Esophagus muscularis mucosa (tissue), 4 donors: ENCODE measurements at regions of chr18 and their contacts with region 1.

Region 1: GRCh38 chr18:64398320-64398719 is 249.4 kb upstream of the LINC00305 start:
- DNase-seq: no peak
- H3K4me3 ChIP-seq: no peak overlapping the region
- H3K27ac ChIP-seq: no peak overlapping the region
- H3K4me1 ChIP-seq: no peaks in the 10 kb centered on the region
- H3K27me3 ChIP-seq: no peaks in the 10 kb centered on the region
- CTCF ChIP-seq: no peak
- EP300 ChIP-seq: no peak
- POLR2A ChIP-seq: no peak

Region 2: DNA sequence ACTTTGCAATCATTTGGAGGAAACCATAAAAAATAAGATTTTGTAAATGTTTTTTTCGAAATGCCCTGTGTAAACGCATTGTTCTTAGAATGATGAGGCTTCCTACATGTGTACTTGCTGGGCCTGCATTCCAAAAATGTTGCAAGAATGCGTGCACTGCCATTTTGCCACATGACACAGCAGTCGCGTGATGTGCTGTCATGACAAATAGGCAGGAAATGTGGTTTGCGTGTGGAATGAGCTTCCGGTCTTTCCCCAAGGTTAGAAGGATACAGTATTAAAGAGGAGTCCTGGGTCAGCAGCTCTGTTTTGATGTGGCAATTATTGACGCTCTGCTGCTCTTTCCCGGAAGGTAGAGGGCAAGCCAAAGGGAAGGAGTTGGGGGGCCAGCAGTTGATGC is 528.9 kb before region 1 on chr18:
- intact Hi-C with region 1: no loop called
- DNase-seq: no peak
- H3K4me3 ChIP-seq: no peak overlapping the region
- H3K27ac ChIP-seq: no peak overlapping the region
- H3K4me1 ChIP-seq: no peaks in the 10 kb centered on the region
- H3K27me3 ChIP-seq: no peaks in the 10 kb centered on the region
- CTCF ChIP-seq: no peak
- EP300 ChIP-seq: no peak
- POLR2A ChIP-seq: no peak

Region 3: GRCh38 chr18:64097497-64097896 is 300.8 kb before region 1 on chr18:
- intact Hi-C with region 1: loop called (anchors 10 kb)
- DNase-seq: no peak
- H3K4me3 ChIP-seq: no peak overlapping the region
- H3K27ac ChIP-seq: no peak overlapping the region
- H3K4me1 ChIP-seq: no peaks in the 10 kb centered on the region
- H3K27me3 ChIP-seq: peaks cover 0 to 6% (median 0%) of the 10 kb centered on the region in 4 donors
- CTCF ChIP-seq: peak in 1 of 3 experiments; percentile 10
- EP300 ChIP-seq: no peak
- POLR2A ChIP-seq: no peak